ENCODE measurements at regions of chr17 and their contacts with region 1.

Region 1: DNA sequence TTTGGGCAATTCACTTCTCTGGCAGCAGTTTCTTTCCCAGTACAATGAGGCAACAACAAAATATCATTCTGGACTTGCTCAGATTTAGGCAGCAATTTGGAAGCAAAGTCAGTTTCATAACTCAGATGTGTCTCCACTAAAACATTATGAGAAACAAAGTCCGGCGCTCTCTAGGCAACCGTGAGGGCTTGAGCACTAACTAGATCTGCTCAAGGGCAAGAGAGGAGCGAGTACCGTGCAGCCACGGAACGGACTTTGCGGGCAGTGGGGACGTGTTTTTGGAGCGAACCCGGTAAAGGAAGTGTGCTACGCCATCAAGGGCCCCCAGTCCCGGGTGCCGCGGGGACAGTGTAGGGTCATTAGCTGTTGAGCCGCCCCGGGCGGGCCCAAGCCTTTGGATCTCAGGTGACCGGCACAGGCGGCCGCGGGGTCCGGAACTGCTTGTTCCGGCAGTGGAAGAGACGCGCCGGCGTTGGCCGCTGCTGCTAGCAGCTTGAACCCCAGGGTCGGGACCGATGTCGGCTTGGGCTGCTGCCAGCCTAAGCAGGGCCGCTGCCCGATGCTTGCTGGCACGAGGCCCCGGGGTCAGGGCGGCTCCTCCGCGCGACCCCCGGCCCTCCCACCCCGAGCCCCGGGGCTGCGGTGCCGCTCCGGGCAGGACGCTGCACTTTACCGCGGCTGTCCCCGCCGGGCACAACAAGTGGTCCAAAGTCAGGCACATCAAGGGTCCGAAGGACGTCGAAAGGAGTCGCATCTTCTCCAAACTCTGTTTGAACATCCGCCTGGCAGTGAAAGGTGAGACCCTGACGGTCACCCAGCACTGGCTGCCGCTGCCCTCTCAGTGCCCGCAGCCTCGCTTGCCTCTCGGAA is at the start of gene TACO1:
- DNase-seq: peak; percentile 24
- ATAC-seq: peak; percentile 98
- H3K4me3 ChIP-seq: peak within 1 kb of the TSS; percentile 75 to 76
- H3K27ac ChIP-seq: peak within 1 kb of the TSS; percentile 86
- H3K4me1 ChIP-seq: peaks cover 8% of the 10 kb centered on the region
- H3K27me3 ChIP-seq: no peaks in the 10 kb centered on the region
- CTCF ChIP-seq: no peak
- total RNA-seq, gene TACO1: 17.9 TPM

Region 2: GRCh38 chr17:63425482-63425881 is 175.3 kb before region 1 on chr17:
- CTCF ChIA-PET with region 1: no interaction called
- POLR2A ChIA-PET with region 1: no interaction called
- in situ Hi-C with region 1: no loop called
- intact Hi-C with region 1: no loop called
- DNase-seq: no peak
- ATAC-seq: peak; percentile 91
- H3K4me3 ChIP-seq: no peak overlapping the region
- H3K27ac ChIP-seq: no peak overlapping the region
- H3K4me1 ChIP-seq: peaks cover 28% of the 10 kb centered on the region
- H3K27me3 ChIP-seq: no peaks in the 10 kb centered on the region
- CTCF ChIP-seq: peak; percentile 96

Region 3: DNA sequence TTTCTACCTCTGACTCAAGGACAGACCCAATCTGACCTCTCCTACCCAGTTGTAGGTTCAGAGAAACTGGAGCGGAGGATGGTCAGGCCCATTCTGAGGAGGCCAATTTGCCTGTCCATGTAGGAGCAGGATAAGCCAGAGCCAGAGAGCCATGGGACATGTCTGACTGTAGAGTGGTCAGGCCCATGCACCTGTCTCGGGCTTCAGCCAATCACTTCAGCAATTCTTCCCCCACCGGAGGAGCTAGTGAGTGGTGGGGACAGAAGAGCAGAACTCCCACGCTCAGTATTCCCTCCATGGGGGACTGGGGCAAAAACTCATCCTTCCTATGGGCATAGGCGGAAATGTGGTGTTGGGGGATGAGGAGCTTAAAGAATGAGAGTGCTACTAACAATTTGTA is 36.2 kb before region 1 on chr17:
- CTCF ChIA-PET with region 1: no interaction called
- POLR2A ChIA-PET with region 1: no interaction called
- in situ Hi-C with region 1: no loop called
- intact Hi-C with region 1: no loop called
- DNase-seq: no peak
- ATAC-seq: no peak
- H3K4me3 ChIP-seq: no peak overlapping the region
- H3K27ac ChIP-seq: no peak overlapping the region
- H3K4me1 ChIP-seq: no peaks in the 10 kb centered on the region
- H3K27me3 ChIP-seq: no peaks in the 10 kb centered on the region
- CTCF ChIP-seq: no peak

Region 4: DNA sequence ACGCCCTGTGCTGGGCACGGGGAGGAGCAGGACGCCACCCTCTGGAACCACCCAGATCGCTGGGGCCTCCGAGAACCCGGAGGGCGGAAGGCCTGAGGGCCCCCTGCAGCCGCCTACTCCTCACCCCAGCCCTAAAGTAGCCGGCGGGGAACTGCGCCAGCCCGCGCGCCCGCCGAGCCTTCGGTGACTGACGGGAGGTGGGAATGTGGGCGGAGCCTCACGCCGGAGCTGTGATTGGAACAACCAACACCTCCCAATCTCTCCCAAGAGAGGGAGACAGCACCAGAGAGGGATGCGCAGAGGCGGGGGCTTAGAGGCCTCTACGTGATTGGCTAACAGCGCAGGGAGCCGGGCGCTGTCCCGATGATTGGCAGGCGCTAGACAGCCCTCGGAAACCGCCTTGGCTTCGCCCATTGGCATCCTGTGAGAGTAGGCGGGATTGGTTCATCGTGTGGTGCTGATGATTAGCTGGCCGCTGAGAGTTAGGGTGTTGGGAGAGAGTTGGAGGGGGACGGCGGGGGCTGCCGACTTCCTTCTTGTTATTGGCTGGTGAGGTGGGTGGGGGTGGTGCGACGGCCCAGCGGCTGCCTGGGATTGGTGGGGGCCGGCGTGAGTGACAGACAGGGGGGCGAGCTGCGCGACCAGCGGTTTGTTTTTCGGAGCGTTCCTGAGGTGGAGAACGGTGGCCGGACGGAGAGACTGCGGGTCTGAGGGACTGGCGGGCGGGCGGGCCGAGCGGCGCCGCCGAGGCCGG is 21.1 kb after region 1 on chr17 and contains the start of gene MAP3K3:
- CTCF ChIA-PET with region 1: no interaction called
- POLR2A ChIA-PET with region 1: interaction called, 16 read pairs
- in situ Hi-C with region 1: no loop called
- intact Hi-C with region 1: no loop called
- DNase-seq: peak; percentile 96
- ATAC-seq: peak; percentile 94
- H3K4me3 ChIP-seq: peak within 1 kb of the TSS; percentile 70 to 76
- H3K27ac ChIP-seq: peak within 1 kb of the TSS; percentile 77
- H3K4me1 ChIP-seq: peaks cover 22% of the 10 kb centered on the region
- H3K27me3 ChIP-seq: no peaks in the 10 kb centered on the region
- CTCF ChIP-seq: no peak
- total RNA-seq, gene MAP3K3: 22.3 TPM

Region 5: GRCh38 chr17:63628822-63629221 is 28.0 kb after region 1 on chr17:
- CTCF ChIA-PET with region 1: no interaction called
- POLR2A ChIA-PET with region 1: interaction called, 10 read pairs
- in situ Hi-C with region 1: no loop called
- intact Hi-C with region 1: no loop called
- DNase-seq: no peak
- ATAC-seq: no peak
- H3K4me3 ChIP-seq: no peak overlapping the region
- H3K27ac ChIP-seq: no peak overlapping the region
- H3K4me1 ChIP-seq: peaks cover 16% of the 10 kb centered on the region
- H3K27me3 ChIP-seq: no peaks in the 10 kb centered on the region
- CTCF ChIP-seq: no peak

Region 6: DNA sequence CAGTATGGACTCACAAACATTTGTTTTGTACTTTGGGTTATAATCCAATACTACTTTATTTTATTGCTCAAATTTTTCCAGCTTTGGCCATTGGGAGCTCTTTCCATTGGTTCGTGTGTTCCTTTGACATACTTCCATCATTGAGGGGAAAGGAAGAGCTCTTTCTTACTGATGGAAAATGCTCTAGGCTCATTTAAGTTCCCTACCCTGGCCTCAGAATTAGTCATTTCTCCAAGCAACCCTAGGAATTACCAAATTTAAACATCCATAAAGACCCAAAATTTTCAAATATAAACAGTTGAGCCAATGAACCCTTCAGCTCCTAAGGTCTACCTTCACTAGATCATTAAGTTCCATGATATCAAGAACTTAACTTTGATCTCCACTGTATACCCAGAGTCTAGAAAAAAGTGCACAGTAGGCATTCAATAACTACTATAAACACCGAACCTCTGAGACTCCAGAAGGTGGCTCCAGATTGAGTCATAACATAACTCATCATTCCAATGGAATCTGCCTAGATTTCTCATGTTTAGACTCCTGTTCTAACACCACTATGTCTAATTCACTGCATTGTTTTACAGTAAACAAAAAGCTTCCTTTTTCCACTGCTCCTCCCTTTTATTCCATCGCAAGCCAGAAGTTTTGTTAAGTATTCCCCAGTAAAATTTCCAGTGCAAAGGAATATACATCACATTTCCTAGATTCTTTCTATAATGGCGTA is 1022.3 kb after region 1 on chr17:
- CTCF ChIA-PET with region 1: no interaction called
- POLR2A ChIA-PET with region 1: no interaction called
- in situ Hi-C with region 1: no loop called
- intact Hi-C with region 1: no loop called
- DNase-seq: peak; percentile 55
- ATAC-seq: peak; percentile 89
- H3K4me3 ChIP-seq: no peak overlapping the region
- H3K27ac ChIP-seq: no peak overlapping the region
- H3K4me1 ChIP-seq: peaks cover 4% of the 10 kb centered on the region; the same call in 1 of the 2 replicates
- H3K27me3 ChIP-seq: no peaks in the 10 kb centered on the region
- CTCF ChIP-seq: no peak